Activated CD4-positive, alpha-beta T cell treated with anti-CD3 and anti-CD28 coated beads, Interleukin-2, amount 10 ng/mL, durations not matched to agents 24 days and 14 days (primary cell): ENCODE measurements at regions of chr17 and their contacts with region 1.

Region 1: DNA sequence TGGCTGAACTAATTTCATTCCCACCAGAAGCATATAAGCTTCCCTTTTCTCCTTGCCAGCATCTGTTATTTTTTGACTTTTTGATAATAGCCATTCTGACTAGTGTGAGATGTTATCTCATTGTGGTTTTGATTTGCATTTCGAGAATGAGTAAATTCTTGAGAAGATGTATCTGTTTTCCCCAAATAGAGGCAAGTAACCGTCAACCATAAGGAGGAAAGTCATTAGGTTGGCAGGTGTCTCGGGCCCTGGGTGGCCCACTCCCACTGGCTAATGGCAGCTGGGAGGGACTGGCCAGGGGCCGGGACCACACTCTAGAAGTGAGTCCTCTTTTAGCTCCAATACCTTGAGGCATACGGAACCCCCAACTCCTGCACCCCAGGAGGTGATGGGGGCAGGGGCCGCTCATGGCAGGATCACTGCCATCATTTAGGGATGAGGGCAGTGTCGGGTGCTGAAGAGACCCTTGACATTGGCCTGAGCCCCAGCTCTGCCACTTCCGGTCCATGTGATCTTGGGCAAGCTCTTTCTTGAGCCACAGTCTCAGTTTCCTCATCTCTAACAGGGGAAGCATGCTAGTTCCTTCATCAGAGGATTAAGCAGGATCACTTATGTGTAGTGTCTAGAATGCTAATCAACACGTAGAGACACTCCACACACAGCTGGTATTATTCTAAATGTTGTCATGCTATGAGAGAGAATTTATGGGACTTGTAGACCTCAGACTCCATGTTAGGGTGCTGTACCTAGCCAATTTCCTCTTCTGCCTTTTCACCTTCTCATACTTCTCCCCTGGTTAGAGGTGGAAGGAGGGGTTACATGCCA is 44.3 kb downstream of the RGS9 start:
- DNase-seq: peak; percentile 82
- H3K4me3 Mint-ChIP-seq: peak overlapping the region; percentile 54
- H3K27ac Mint-ChIP-seq: peak overlapping the region; percentile 87
- H3K4me1 Mint-ChIP-seq: peaks cover 73% of the 10 kb centered on the region
- H3K27me3 Mint-ChIP-seq: no peaks in the 10 kb centered on the region

Region 2: GRCh38 chr17:65039336-65039988 is 142.0 kb before region 1 on chr17:
- intact Hi-C with region 1: loop called (anchors 5 kb)
- DNase-seq: peak; percentile 85
- H3K4me3 Mint-ChIP-seq: peak overlapping the region; percentile 68
- H3K27ac Mint-ChIP-seq: peak overlapping the region; percentile 79
- H3K4me1 Mint-ChIP-seq: peaks cover 66% of the 10 kb centered on the region
- H3K27me3 Mint-ChIP-seq: no peaks in the 10 kb centered on the region

Region 3: GRCh38 chr17:65109990-65110680 is 71.3 kb before region 1 on chr17:
- intact Hi-C with region 1: no loop called
- DNase-seq: no peak
- H3K4me3 Mint-ChIP-seq: no peak overlapping the region
- H3K27ac Mint-ChIP-seq: no peak overlapping the region
- H3K4me1 Mint-ChIP-seq: no peaks in the 10 kb centered on the region
- H3K27me3 Mint-ChIP-seq: peaks cover 42% of the 10 kb centered on the region

Region 4: DNA sequence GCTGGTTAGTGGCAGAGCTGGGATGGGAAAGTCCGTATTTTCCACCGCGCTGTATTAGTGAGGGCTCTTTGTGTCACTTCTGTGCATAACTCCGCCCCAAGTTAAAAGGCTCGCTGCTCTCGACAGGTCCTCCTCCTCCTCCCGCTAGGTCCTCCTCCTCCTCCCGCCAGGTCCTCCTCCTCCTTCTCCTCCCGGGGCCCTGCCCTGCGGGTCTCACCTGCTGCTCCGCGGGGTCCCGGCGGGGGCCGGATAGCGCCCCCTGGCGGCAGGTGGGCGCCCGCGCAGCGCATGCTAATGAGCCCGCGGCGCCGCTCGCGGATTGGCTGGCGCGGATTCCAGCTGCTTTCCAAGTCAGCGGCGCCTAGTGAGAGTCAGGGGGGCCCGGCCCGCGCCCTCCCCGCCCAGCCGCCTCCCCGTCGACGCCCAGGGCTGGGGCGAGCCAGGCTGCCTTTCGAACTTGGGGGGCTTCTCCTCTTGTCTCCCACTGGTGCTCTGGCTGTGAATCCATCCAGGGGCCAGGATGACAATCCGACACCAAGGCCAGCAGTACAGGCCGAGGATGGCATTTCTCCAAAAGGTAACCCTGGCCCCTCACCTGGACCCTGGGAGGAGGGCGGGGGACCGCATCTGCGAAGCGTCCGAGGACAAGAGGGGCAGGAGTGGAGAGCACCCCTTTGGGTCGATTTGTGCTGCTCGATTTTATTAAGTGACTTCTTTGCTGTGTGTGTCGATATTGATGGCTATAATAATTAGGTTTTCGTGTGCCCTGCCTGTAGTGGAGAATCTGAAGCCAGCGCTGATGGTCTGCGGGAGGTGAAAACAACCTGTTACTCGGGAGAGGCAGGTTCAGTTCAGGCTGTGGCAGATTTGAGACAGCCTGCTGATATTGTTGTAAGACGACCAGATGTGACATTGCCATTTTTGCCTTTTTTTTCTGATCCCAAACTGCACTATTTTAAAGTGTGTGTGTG is 44.1 kb before region 1 on chr17 and contains the start of gene RGS9:
- intact Hi-C with region 1: loop called (anchors 5 kb)
- DNase-seq: peak; percentile 97
- H3K4me3 Mint-ChIP-seq: peak within 1 kb of the TSS; percentile 80
- H3K27ac Mint-ChIP-seq: peak within 1 kb of the TSS; percentile 50
- H3K4me1 Mint-ChIP-seq: peaks cover 31% of the 10 kb centered on the region
- H3K27me3 Mint-ChIP-seq: peaks cover 15% of the 10 kb centered on the region
- total RNA-seq, gene RGS9: 2.2 and 3.1 TPM in 2 replicates

Region 5: GRCh38 chr17:65163990-65164495 is 17.4 kb before region 1 on chr17:
- intact Hi-C with region 1: loop called (anchors 1 kb)
- DNase-seq: peak; percentile 86
- H3K4me3 Mint-ChIP-seq: peak overlapping the region; percentile 47
- H3K27ac Mint-ChIP-seq: peak overlapping the region; percentile 77
- H3K4me1 Mint-ChIP-seq: peaks cover 20% of the 10 kb centered on the region
- H3K27me3 Mint-ChIP-seq: no peaks in the 10 kb centered on the region

Region 6: DNA sequence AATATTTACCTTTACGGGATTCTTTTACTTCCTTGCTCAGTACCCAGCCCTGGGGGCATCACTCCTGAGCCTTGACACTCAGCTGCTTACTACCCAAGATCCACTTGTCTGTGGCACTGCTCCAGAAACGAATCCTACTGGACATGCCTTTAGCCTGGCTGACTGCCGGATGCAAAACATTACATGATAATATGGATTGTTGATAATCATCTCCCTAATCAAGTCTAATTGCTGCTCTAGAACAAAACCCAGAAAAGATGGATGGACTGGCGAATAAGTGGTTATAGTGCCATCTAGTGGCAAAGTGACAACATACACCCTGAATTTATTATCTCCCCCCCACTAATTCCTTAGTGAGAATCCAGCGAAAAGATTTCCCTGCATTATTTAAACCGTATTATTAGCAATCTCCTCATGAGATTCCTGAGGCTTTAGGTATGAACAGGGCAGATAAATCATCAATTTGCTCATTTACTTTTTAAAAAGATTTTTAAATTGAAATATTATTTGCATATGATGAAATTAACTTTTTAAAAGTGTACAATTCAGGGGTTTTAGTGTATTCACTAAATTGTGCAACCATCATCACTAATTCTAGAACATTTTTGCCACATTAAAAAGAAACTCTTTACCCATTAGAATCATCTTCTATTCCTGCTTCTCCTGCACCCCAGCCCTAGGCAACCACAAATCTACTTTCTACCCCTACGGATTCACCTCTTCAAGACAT is 17.4 kb after region 1 on chr17:
- intact Hi-C with region 1: loop called (anchors 2 kb)
- DNase-seq: peak; percentile 75
- H3K4me3 Mint-ChIP-seq: no peak overlapping the region
- H3K27ac Mint-ChIP-seq: no peak overlapping the region
- H3K4me1 Mint-ChIP-seq: peaks cover 24% of the 10 kb centered on the region
- H3K27me3 Mint-ChIP-seq: peaks cover 8% of the 10 kb centered on the region

Region 7: GRCh38 chr17:65297378-65297777 is 115.9 kb after region 1 on chr17:
- intact Hi-C with region 1: no loop called
- DNase-seq: no peak
- H3K4me3 Mint-ChIP-seq: no peak overlapping the region
- H3K27ac Mint-ChIP-seq: no peak overlapping the region
- H3K4me1 Mint-ChIP-seq: no peaks in the 10 kb centered on the region
- H3K27me3 Mint-ChIP-seq: peaks cover 12% of the 10 kb centered on the region

Region 8: DNA sequence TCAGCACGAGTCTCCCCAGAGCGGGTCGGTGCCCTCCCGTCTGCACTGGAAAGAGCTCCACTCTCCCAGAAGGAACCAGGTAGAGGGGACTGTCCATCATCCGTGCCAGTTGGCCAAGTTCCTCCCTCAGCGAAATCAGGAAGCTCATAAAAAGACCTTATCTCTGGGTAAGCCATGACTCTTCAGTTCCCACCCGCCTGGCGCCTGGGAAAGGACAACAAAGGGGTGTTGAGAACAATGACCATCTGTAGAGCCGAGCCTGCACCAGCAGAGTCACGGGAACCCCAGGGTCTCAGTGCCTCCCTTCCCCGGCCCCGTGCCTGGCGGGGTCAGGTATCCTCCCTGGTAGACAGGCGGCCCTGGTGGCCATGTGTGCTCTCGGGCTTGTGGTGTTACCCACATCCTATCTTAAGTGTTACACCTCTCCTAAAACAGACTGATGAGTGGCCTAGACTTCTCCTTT is 189.3 kb after region 1 on chr17:
- intact Hi-C with region 1: no loop called
- DNase-seq: no peak
- H3K4me3 Mint-ChIP-seq: no peak overlapping the region
- H3K27ac Mint-ChIP-seq: no peak overlapping the region
- H3K4me1 Mint-ChIP-seq: peaks cover 7% of the 10 kb centered on the region
- H3K27me3 Mint-ChIP-seq: peaks cover 8% of the 10 kb centered on the region